ENCODE measurements at regions of chr10 and their contacts with region 1.

Region 1: GRCh38 chr10:92517034-92517655 is 56.7 kb downstream of the IDE start:
- DNase-seq: peak; percentile 55
- H3K27ac ChIP-seq: no peak overlapping the region
- CTCF ChIP-seq: peak; percentile 84

Region 2: GRCh38 chr10:92184977-92185376 is 332.2 kb before region 1 on chr10:
- CTCF ChIA-PET with region 1: no interaction called
- POLR2A ChIA-PET with region 1: no interaction called
- DNase-seq: no peak
- H3K27ac ChIP-seq: no peak overlapping the region
- CTCF ChIP-seq: no peak

Region 3: DNA sequence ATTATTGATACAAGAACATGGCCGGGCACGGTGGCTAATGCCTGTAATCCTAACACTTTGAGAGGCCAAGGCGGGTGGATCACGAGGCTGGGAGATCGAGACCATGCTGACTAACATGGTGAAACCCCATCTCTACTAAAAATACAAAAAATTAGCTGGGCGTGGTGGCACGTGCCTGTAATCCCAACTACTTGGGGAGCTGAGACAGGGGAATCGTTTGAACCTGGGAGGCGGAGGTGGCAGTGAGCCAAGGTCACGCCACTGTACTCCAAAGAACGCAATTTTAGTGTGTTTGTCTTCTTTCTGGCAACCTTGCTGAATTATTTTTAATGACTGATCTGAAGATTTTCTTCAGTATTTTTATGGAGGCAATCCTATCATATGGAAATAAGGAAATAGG is 10.6 kb after region 1 on chr10:
- CTCF ChIA-PET with region 1: interaction called, 16 read pairs
- POLR2A ChIA-PET with region 1: no interaction called
- DNase-seq: no peak
- H3K27ac ChIP-seq: no peak overlapping the region
- CTCF ChIP-seq: no peak